B cell (primary cell): ENCODE measurements at regions of chr3 and their contacts with region 1.

Region 1: GRCh38 chr3:122299872-122300460 is 25.1 kb upstream of the CSTA start:
- DNase-seq: peak; percentile 32
- ATAC-seq: no peak
- H3K4me3 ChIP-seq: no peak overlapping the region
- H3K4me3 Mint-ChIP-seq: no peak overlapping the region
- H3K27ac ChIP-seq: no peak overlapping the region
- H3K27ac Mint-ChIP-seq: no peak overlapping the region
- H3K4me1 ChIP-seq: peaks cover 10 to 11% of the 10 kb centered on the region in 2 donors
- H3K4me1 Mint-ChIP-seq: peaks cover 9% of the 10 kb centered on the region
- H3K27me3 ChIP-seq: no peaks in the 10 kb centered on the region
- H3K27me3 Mint-ChIP-seq: no peaks in the 10 kb centered on the region
- CTCF ChIP-seq: peak; percentile 70

Region 2: DNA sequence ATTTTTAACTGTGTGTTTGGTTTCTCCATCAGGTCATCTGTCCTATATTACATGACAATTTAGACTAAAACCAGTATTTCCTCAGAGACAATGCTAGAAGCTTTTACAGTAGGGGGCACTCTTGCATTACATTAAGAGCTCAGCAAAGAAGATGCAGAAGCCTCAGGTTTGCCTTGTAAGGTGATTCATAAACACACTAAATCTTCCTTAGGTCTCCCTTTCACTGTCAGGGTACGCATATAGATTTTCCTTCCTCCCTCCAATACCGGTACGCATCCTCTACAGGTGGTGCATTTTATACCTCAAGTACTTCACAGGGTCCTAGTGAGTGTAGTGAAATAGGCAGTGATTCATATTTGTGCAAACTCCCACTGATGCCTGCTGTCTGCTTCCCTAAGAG is 198.3 kb before region 1 on chr3:
- CTCF ChIA-PET with region 1: interaction called, 3 read pairs
- POLR2A ChIA-PET with region 1: no interaction called
- intact Hi-C with region 1: loop called (anchors 5 kb)
- DNase-seq: peak; percentile 78
- ATAC-seq: peak; percentile 59
- H3K4me3 ChIP-seq: no peak overlapping the region
- H3K4me3 Mint-ChIP-seq: peak overlapping the region; percentile 82
- H3K27ac ChIP-seq: no peak overlapping the region
- H3K27ac Mint-ChIP-seq: peak overlapping the region; percentile 11
- H3K4me1 ChIP-seq: peaks cover 6 to 13% of the 10 kb centered on the region in 2 donors
- H3K4me1 Mint-ChIP-seq: peaks cover 24% of the 10 kb centered on the region
- H3K27me3 ChIP-seq: no peaks in the 10 kb centered on the region
- H3K27me3 Mint-ChIP-seq: no peaks in the 10 kb centered on the region
- CTCF ChIP-seq: peak; percentile 73